ENCODE measurements at regions of chr7 and their contacts with region 1.

Region 1: GRCh38 chr7:108497082-108497725 is 28.7 kb downstream of the PNPLA8 start:
- DNase-seq: peak; percentile 52
- CTCF ChIP-seq: peak; percentile 83

Region 2: GRCh38 chr7:108146070-108146837 is 350.9 kb before region 1 on chr7:
- CTCF ChIA-PET with region 1: interaction called, 16 read pairs
- POLR2A ChIA-PET with region 1: no interaction called
- DNase-seq: peak; percentile 25
- CTCF ChIP-seq: peak; percentile 80

Region 3: DNA sequence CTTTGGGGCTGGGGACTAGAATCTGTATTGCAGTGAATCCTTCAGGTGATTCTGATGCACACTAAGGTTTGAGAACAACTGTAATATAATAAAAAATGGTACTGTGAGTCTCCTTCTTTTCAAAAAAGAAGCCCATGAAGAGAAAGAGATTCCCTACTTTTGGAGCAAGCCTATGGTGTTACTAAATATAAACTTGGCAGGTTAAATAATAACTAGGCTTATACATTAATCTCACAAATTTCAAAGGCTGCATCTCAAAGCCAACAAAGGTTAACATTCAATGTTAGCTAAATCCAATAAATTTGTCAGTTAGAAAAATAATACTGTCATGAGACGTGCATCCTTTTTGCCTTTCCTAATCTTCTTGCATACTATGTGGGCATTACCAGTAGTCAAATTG is 207.4 kb before region 1 on chr7:
- CTCF ChIA-PET with region 1: no interaction called
- POLR2A ChIA-PET with region 1: no interaction called
- DNase-seq: no peak
- CTCF ChIP-seq: no peak

Region 4: DNA sequence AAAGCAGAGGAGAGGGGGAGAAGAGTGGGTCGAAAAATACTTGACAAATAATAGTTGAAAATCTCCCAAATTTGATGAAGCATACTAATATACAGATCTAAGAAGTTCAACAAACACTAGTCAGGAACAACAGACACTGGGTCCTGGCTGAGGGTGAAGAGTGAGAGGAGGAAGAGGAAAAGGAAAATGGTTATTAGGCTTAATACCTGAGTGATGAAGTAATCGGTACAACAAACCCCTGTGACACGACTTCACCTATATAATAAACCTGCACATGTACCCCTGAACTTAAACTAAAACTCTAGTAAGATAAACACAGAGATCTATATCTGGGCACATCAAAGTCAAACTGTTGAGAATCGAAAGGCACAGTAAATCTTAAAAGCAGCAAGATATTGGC is 61.8 kb before region 1 on chr7:
- CTCF ChIA-PET with region 1: no interaction called
- POLR2A ChIA-PET with region 1: no interaction called
- DNase-seq: no peak
- CTCF ChIP-seq: no peak

Region 5: DNA sequence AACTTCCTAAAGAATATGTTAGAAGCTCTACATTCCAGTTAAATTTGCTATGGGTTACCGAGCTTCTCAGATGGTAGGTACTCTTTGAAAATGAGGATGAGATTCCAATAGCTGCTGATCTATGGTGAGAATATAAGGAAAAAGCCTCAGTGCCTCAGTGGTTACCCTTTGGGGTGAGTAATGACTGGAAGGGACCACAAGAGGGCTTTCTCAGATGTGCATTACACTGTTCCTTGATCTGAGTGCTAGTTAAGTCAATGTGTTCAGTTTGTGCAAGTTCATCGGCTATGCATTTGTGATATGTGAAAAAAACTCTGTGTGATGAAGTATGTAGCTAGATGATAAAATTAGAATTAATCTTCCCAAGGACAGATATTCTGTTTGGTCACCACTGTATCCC is 44.5 kb before region 1 on chr7:
- CTCF ChIA-PET with region 1: interaction called, 21 read pairs
- POLR2A ChIA-PET with region 1: no interaction called
- DNase-seq: peak; percentile 31
- CTCF ChIP-seq: peak; percentile 63

Region 6: DNA sequence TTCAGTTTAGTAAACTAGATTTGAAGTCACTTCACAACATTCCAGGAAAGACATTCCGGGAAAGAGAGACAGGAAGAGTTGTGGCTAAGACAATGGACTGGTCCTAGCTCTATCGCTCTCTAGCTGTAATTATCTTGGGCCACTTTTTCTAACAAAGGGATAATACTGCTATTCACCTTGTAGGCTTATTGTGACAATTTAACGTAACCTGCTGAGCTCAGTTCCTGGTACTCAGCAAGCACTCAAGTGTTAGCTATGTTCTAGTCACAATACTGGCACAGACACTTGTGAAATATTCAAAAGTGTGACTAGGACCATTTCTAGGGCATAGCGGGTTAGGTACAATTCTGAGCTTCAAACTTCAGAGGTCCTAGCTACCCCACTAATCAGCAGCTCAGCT is 29.0 kb before region 1 on chr7:
- CTCF ChIA-PET with region 1: interaction called, 15 read pairs
- POLR2A ChIA-PET with region 1: no interaction called
- DNase-seq: no peak
- CTCF ChIP-seq: no peak

Region 7: GRCh38 chr7:108486291-108486966 is 10.8 kb before region 1 on chr7:
- CTCF ChIA-PET with region 1: interaction called, 40 read pairs
- POLR2A ChIA-PET with region 1: no interaction called
- DNase-seq: no peak
- CTCF ChIP-seq: no peak

Region 8: DNA sequence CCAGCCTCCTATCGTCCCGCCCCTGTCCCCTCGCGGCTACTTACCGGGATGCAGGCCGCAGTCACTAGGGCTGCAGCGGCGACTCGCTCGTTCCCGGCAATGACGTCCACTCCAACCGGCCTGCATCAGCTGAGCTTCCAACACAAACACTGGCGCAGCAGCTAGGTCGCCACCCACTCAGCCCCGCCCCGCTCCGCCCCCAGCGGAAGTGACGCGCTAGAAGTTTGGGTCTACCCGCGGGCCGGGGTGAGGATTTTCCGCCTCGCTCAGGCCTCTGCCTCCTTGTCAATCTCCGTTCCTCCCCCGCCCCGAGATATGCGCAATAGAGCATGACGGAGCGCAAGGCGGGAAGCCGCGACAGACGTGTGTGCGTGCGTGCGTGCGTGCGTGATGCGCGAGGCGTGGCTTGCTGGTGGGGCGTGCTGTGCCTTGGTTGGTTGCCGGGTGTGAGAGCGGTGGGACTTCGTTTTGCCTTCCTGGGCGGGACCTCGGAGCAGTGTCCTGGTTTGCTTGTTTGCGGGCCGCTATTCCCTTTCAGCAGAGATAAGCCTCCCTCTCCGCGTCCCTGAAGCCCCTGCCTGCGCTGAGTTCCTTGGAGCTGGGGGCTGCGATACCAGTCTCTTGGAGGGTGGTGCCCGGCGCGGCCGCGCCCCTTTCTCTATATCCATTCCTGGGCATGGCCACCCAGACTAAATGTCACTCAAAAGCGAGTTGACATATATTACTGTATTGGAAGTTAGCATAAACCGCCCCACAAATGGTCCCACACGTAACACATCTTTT is 29.0 kb after region 1 on chr7 and contains the start of gene PNPLA8:
- CTCF ChIA-PET with region 1: interaction called, 10 read pairs
- POLR2A ChIA-PET with region 1: no interaction called
- DNase-seq: peak; percentile 97
- CTCF ChIP-seq: no peak